Naive thymus-derived CD4-positive, alpha-beta T cell (primary cell): ENCODE measurements at regions of chr21 and their contacts with region 1.

Region 1: GRCh38 chr21:32674731-32675130 is 53.1 kb downstream of the SYNJ1 start:
- DNase-seq: no peak
- ATAC-seq: no peak
- H3K4me3 ChIP-seq: no peak overlapping the region
- H3K4me3 Mint-ChIP-seq: no peak overlapping the region
- H3K27ac ChIP-seq: no peak overlapping the region
- H3K27ac Mint-ChIP-seq: no peak overlapping the region
- H3K4me1 ChIP-seq: no peaks in the 10 kb centered on the region
- H3K4me1 Mint-ChIP-seq: no peaks in the 10 kb centered on the region
- H3K27me3 ChIP-seq: no peaks in the 10 kb centered on the region
- H3K27me3 Mint-ChIP-seq: no peaks in the 10 kb centered on the region

Region 2: DNA sequence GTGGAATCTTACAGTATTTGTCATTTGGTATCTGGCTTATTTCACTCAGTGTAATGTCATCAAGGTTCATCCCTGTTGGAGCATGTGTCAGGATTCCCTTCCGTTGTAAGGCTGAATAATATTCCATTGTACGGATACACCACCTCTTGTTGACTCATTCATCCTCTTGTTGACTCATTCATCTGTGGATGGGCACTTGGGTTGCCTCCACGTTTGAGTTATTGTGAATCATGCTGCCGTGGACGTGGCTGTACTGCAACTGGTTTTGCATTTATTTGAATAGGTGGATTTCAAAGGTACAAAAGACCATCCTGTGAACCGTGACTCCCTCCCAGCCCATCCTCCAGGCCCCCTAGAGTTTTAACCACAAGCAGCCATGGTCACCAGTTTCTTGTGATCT is 77.5 kb before region 1 on chr21:
- CTCF ChIA-PET with region 1: no interaction called
- POLR2A ChIA-PET with region 1: no interaction called
- intact Hi-C with region 1: no loop called
- DNase-seq: no peak
- ATAC-seq: no peak
- H3K4me3 ChIP-seq: no peak overlapping the region
- H3K4me3 Mint-ChIP-seq: no peak overlapping the region
- H3K27ac ChIP-seq: no peak overlapping the region
- H3K27ac Mint-ChIP-seq: peak overlapping the region in 1 of 9 donors; percentile 8
- H3K4me1 ChIP-seq: no peaks in the 10 kb centered on the region
- H3K4me1 Mint-ChIP-seq: peaks cover 0 to 4% (median 0%) of the 10 kb centered on the region in 7 donors
- H3K27me3 ChIP-seq: no peaks in the 10 kb centered on the region
- H3K27me3 Mint-ChIP-seq: no peaks in the 10 kb centered on the region

Region 3: DNA sequence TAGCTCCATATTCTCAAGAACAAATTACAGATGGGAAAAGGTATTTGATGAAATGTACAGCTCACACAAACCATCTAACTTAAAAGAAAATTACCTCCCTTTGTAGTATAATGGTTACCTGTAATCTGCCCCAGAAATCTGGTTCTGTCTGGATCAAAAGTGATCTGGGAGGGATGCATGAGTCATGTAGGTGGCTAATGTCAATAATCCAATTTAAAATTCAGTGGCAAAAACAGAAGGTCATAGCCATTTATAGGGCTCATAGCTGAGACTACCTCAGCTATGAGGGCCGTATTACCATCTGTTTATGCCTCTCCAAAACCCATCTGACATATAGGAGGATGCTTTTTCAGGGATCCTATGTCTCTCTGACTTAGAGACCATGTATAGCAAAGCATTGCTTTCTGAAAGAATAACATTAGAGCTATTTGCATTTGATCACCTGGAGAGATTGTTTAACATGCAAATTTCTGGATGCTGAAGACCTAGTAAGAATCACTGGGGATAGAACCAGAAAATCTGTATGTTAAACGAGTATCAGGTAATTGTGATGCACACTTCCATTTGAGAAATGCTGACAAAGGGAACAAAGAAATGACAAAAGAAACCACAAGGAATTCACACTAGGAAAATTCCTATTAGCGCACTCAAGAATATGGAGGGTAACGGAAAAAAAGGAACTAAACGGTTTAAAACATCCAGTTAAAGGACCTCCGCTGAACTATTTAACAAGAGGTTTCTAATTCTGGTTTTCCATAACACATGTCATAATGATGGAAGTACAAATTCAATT is 79.3 kb after region 1 on chr21:
- CTCF ChIA-PET with region 1: no interaction called
- POLR2A ChIA-PET with region 1: no interaction called
- intact Hi-C with region 1: loop called in 1 of 2 experiments (anchors 5 kb)
- DNase-seq: no peak
- ATAC-seq: no peak
- H3K4me3 ChIP-seq: no peak overlapping the region
- H3K4me3 Mint-ChIP-seq: no peak overlapping the region
- H3K27ac ChIP-seq: no peak overlapping the region
- H3K27ac Mint-ChIP-seq: peak overlapping the region in 2 of 9 donors; percentile 38 to 51
- H3K4me1 ChIP-seq: no peaks in the 10 kb centered on the region
- H3K4me1 Mint-ChIP-seq: peaks cover 0 to 17% (median 9%) of the 10 kb centered on the region in 7 donors
- H3K27me3 ChIP-seq: no peaks in the 10 kb centered on the region
- H3K27me3 Mint-ChIP-seq: no peaks in the 10 kb centered on the region

Region 4: GRCh38 chr21:32770871-32771523 is 96.3 kb after region 1 on chr21:
- CTCF ChIA-PET with region 1: no interaction called
- POLR2A ChIA-PET with region 1: no interaction called
- intact Hi-C with region 1: no loop called
- DNase-seq: peak in 1 of 9 donors; percentile 42
- ATAC-seq: peak; percentile 36
- H3K4me3 ChIP-seq: peak overlapping the region; percentile 77
- H3K4me3 Mint-ChIP-seq: peak overlapping the region; percentile 90 to 97 (median 94)
- H3K27ac ChIP-seq: peak overlapping the region; percentile 79
- H3K27ac Mint-ChIP-seq: peak overlapping the region; percentile 90 to 99 (median 95)
- H3K4me1 ChIP-seq: peaks cover 29 to 31% of the 10 kb centered on the region in 2 donors
- H3K4me1 Mint-ChIP-seq: peaks cover 43 to 75% (median 66%) of the 10 kb centered on the region in 7 donors
- H3K27me3 ChIP-seq: no peaks in the 10 kb centered on the region
- H3K27me3 Mint-ChIP-seq: peaks cover 0 to 5% (median 0%) of the 10 kb centered on the region in 5 donors